Caco-2 (cell line): ENCODE measurements at regions of chr7 and their contacts with region 1.

Region 1: DNA sequence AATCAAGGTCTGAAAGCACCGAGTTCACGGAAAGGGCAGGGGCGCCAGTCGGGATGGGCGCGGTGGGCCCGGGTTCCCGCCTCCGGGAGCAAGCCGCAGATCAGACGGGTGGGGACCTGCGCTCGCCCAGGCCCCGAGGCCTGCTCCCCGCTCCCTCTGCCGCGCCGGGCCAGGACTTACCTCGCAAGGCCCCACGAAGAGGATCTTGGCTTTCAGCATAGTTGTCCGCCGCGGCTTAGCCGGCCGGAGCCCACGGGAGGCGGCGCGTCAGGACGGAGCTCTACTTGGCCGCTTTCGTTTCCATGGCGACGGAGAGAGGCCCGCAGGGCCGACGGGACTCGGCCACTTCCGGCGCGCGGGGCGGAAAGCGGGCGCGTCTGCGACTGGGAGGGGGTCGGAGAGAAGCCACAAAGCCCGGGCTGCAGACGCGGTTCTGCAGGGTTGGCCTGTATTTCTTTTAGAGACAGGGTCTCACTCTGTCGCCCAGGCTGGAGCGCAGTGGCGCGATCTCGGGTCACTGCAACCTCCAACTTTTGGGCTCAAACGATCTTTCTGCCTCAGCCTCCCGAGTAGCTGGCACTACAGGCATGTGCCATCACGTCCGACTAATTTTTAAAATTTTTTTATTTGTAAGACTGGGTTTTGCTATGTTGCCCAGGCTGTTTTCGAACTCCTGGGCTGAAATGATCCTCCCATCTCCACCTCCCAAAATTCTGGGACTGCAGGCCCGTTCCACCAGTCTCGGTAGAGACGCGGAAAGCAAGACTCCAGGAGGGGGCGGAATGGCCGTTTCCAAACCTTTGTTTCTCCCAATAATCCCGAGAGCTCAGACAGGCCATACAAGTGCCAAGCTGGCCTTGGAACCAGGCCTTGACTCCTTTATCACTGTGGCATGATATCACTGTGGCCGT is at the start of gene IFT22:
- DNase-seq: peak; percentile 92 to 93
- H3K4me3 ChIP-seq: peak within 1 kb of the TSS; percentile 95
- H3K4me3 Mint-ChIP-seq: peak within 1 kb of the TSS; percentile 87
- H3K27ac Mint-ChIP-seq: peak within 1 kb of the TSS; percentile 91
- H3K4me1 ChIP-seq: 0 out of 2 replicates have a peak, but pooled peaks cover 5% of the 10 kb centered on the region
- H3K4me1 Mint-ChIP-seq: no peaks in the 10 kb centered on the region
- H3K27me3 ChIP-seq: no peaks in the 10 kb centered on the region
- H3K27me3 Mint-ChIP-seq: no peaks in the 10 kb centered on the region
- CTCF ChIP-seq: peak; percentile 53 to 66
- total RNA-seq, gene IFT22: 14.4 and 17.4 TPM in 2 replicates

Region 2: GRCh38 chr7:101308245-101309085 is 13.3 kb before region 1 on chr7:
- CTCF ChIA-PET with region 1: interaction called, 10 read pairs
- POLR2A ChIA-PET with region 1: interaction called, 19 read pairs
- intact Hi-C with region 1: no loop called
- DNase-seq: peak; percentile 90 to 94
- H3K4me3 ChIP-seq: peak overlapping the region; percentile 87
- H3K4me3 Mint-ChIP-seq: peak overlapping the region; percentile 100
- H3K27ac Mint-ChIP-seq: peak overlapping the region; percentile 99
- H3K4me1 ChIP-seq: no peaks in the 10 kb centered on the region
- H3K4me1 Mint-ChIP-seq: peaks cover 9% of the 10 kb centered on the region
- H3K27me3 ChIP-seq: no peaks in the 10 kb centered on the region
- H3K27me3 Mint-ChIP-seq: no peaks in the 10 kb centered on the region
- CTCF ChIP-seq: no peak

Region 3: DNA sequence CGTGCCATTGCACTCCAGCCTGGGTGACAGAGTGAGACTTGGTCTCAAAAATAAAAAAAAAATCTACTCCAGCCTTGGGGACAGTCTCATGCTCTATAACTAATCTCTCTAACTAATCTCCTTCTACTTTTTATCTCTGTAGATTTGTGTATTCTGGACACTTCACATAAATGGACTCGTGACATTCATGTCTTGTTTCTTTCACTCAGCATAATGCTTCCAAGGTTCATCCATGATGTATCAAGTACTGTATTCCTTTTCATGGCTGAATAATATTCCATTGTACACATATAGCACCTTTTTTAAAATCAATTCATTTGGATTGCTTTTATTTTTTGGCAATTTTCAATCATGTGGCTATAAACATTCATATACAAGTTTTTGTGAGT is 31.2 kb after region 1 on chr7:
- CTCF ChIA-PET with region 1: interaction called, 8 read pairs
- POLR2A ChIA-PET with region 1: no interaction called
- intact Hi-C with region 1: loop called (anchors 1 kb)
- DNase-seq: no peak
- H3K4me3 ChIP-seq: no peak overlapping the region
- H3K4me3 Mint-ChIP-seq: no peak overlapping the region
- H3K27ac Mint-ChIP-seq: peak overlapping the region; percentile 15
- H3K4me1 ChIP-seq: peaks cover 12% of the 10 kb centered on the region
- H3K4me1 Mint-ChIP-seq: peaks cover 21% of the 10 kb centered on the region
- H3K27me3 ChIP-seq: no peaks in the 10 kb centered on the region
- H3K27me3 Mint-ChIP-seq: no peaks in the 10 kb centered on the region
- CTCF ChIP-seq: no peak

Region 4: GRCh38 chr7:101436857-101437576 is 115.3 kb after region 1 on chr7:
- CTCF ChIA-PET with region 1: interaction called, 9 read pairs
- POLR2A ChIA-PET with region 1: no interaction called
- intact Hi-C with region 1: loop called (anchors 1 kb)
- DNase-seq: peak; percentile 69 to 80
- H3K4me3 ChIP-seq: no peak overlapping the region
- H3K4me3 Mint-ChIP-seq: peak overlapping the region; percentile 28
- H3K27ac Mint-ChIP-seq: peak overlapping the region; percentile 21
- H3K4me1 ChIP-seq: peaks cover 11% of the 10 kb centered on the region
- H3K4me1 Mint-ChIP-seq: peaks cover 7% of the 10 kb centered on the region
- H3K27me3 ChIP-seq: no peaks in the 10 kb centered on the region
- H3K27me3 Mint-ChIP-seq: no peaks in the 10 kb centered on the region
- CTCF ChIP-seq: no peak